Activated CD4-positive, alpha-beta memory T cell treated with anti-CD3 and anti-CD28 coated beads for 36 hours (primary cell): ENCODE measurements at regions of chr10 and their contacts with region 1.

Region 1: GRCh38 chr10:78302989-78303854 is 269.6 kb downstream of the RPS24 start:
- DNase-seq: peak; percentile 98
- H3K4me3 Mint-ChIP-seq: peak overlapping the region; percentile 84
- H3K27ac Mint-ChIP-seq: peak overlapping the region; percentile 89
- H3K4me1 Mint-ChIP-seq: peaks cover 11% of the 10 kb centered on the region
- H3K27me3 Mint-ChIP-seq: no peaks in the 10 kb centered on the region

Region 2: GRCh38 chr10:77837240-77837924 is 465.8 kb before region 1 on chr10:
- CTCF ChIA-PET with region 1: no interaction called
- POLR2A ChIA-PET with region 1: no interaction called
- intact Hi-C with region 1: loop called (anchors 1 kb)
- DNase-seq: peak; percentile 89
- H3K4me3 Mint-ChIP-seq: no peak overlapping the region
- H3K27ac Mint-ChIP-seq: peak overlapping the region; percentile 23
- H3K4me1 Mint-ChIP-seq: peaks cover 16% of the 10 kb centered on the region
- H3K27me3 Mint-ChIP-seq: no peaks in the 10 kb centered on the region

Region 3: GRCh38 chr10:78278058-78278404 is 25.2 kb before region 1 on chr10:
- CTCF ChIA-PET with region 1: no interaction called
- POLR2A ChIA-PET with region 1: no interaction called
- intact Hi-C with region 1: no loop called
- DNase-seq: no peak
- H3K4me3 Mint-ChIP-seq: no peak overlapping the region
- H3K27ac Mint-ChIP-seq: no peak overlapping the region
- H3K4me1 Mint-ChIP-seq: no peaks in the 10 kb centered on the region
- H3K27me3 Mint-ChIP-seq: peaks cover 4% of the 10 kb centered on the region

Region 4: GRCh38 chr10:78579995-78580394 is 276.8 kb after region 1 on chr10:
- CTCF ChIA-PET with region 1: no interaction called
- POLR2A ChIA-PET with region 1: no interaction called
- intact Hi-C with region 1: loop called (anchors 1 kb)
- DNase-seq: no peak
- H3K4me3 Mint-ChIP-seq: no peak overlapping the region
- H3K27ac Mint-ChIP-seq: no peak overlapping the region
- H3K4me1 Mint-ChIP-seq: peaks cover 14% of the 10 kb centered on the region
- H3K27me3 Mint-ChIP-seq: no peaks in the 10 kb centered on the region

Region 5: GRCh38 chr10:78972947-78973900 is 670.0 kb after region 1 on chr10:
- CTCF ChIA-PET with region 1: no interaction called
- POLR2A ChIA-PET with region 1: no interaction called
- intact Hi-C with region 1: loop called (anchors 5 kb)
- DNase-seq: peak; percentile 83
- H3K4me3 Mint-ChIP-seq: peak overlapping the region; percentile 49
- H3K27ac Mint-ChIP-seq: peak overlapping the region; percentile 43
- H3K4me1 Mint-ChIP-seq: peaks cover 22% of the 10 kb centered on the region
- H3K27me3 Mint-ChIP-seq: no peaks in the 10 kb centered on the region

Region 6: DNA sequence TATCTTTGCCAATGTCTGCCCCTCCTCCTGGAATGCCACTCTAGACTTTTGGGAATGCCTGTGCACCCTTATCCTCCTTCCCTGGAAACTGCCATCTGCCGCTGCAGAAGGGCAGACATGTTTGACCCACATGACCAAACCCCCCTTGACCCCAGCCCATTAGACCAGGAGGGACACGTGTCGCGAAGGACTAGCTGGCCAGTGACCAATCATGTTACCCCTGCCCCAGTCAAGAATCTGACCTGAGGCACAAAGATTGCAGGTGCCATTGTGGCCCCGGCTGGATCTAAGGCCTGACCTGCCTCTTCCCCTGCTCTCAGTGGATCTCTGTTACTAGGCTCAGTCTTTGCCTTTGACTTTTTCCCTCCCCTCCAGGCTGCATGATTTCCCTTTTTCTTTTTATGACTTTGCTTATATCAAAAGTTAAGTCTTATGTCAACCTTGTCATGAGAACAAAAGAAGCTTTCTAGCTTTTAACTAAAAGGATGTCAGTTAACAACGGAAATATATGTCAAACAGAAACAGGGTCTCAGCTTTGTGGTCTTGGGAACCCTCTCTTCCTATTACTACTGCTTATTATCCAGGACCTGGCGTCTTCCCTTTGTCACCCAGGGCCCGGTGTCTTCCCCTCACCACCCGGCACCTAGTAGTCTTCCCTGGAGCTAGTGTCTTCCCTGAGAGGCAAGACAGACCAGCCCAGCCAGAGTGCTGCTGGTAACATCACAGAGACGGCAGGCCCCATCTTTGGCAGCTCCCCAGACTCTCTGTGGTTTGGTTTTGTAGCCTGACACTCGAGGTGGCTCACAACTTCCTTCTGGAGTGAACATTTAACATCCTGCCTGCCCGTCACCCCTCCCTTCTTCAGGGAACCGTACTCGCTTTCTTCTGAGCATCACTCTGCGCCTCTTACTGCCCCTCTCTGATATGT is 1019.7 kb after region 1 on chr10:
- CTCF ChIA-PET with region 1: no interaction called
- POLR2A ChIA-PET with region 1: no interaction called
- intact Hi-C with region 1: loop called (anchors 10 kb)
- DNase-seq: peak; percentile 91
- H3K4me3 Mint-ChIP-seq: peak overlapping the region; percentile 39
- H3K27ac Mint-ChIP-seq: peak overlapping the region; percentile 92
- H3K4me1 Mint-ChIP-seq: peaks cover 69% of the 10 kb centered on the region
- H3K27me3 Mint-ChIP-seq: no peaks in the 10 kb centered on the region